ENCODE measurements at regions of chr3 and their contacts with region 1.

Region 1: DNA sequence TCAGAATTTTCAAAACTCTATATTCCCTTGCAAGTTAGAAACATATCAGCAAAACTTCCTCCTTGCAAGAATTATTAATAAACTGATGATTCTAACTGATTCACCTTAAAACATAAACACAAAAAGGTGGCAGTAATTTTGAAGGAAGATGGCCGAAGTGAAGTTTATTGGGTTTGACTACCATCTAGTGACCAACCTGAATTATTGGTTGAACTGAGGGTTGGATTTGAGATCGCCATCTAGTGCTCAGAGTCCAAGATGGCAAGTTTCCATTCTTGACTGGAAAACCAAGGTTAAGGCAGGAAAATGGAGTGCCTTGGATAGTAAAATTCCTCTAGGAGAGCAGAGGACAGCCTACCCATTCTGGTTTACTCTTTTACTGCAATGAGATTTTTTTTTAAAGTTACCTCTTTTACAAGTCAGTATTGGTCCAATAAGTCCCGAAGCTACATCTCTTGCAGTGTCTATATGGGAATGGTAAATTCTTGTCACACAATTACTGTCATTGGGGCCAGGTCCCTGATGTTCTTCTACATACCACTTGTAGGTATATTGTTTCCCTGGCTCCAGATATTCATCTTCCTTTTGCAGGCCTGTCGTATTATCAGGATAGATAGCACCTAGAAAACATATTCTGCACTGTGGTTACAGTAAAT is 51.6 kb upstream of the CP start:
- DNase-seq: peak; percentile 57 to 70
- H3K4me3 ChIP-seq: no peak overlapping the region
- H3K4me3 Mint-ChIP-seq: no peak overlapping the region
- H3K27ac Mint-ChIP-seq: no peak overlapping the region
- H3K4me1 ChIP-seq: peaks cover 12% of the 10 kb centered on the region
- H3K4me1 Mint-ChIP-seq: peaks cover 21% of the 10 kb centered on the region
- H3K27me3 ChIP-seq: no peaks in the 10 kb centered on the region
- H3K27me3 Mint-ChIP-seq: no peaks in the 10 kb centered on the region
- CTCF ChIP-seq: peak; percentile 90 to 95

Region 2: DNA sequence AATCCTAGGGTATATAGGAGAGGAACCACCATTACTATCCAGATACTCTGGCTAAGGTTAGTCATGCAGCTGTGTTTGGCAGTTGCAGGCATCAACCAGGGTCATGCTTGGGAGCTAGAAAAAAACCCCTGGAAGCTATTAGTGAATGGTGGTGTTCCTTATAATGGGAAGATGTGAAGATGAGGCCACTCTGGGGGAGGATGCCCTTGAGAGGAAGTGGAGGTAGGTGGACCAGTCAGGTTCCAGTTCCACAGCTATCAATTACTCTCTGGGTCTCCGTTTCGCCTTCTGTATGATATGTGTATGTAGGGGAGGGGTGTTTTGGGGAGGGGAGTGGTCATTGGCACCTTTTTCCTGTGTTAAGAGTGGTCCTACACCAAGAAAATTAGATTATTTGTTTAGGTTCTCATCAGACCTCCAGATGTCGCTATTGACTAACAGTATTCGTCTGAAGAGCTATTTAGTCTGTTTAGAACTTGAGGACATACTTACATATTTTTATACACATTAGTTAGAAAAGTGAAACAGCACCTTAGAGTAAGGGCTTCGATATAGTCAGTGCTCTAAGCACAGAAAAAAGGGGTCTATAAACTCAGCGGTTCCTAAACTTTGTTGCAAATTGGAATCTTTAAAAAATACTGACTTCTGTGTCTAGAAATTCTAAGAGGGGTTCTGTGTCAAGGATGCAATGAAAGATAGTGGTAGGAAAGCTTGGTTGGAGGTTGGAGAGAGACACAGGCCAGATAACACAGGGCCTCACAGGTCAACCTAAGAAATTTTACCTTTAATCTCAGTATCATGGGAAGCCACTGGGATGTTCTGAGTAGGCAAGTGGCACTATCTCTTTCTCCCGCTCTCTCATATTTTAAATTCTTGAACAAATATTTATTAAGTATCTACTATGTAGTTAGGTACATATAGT is 152.9 kb before region 1 on chr3:
- CTCF ChIA-PET with region 1: interaction called, 12 read pairs
- POLR2A ChIA-PET with region 1: no interaction called
- intact Hi-C with region 1: loop called (anchors 1 kb)
- DNase-seq: peak in 1 of 2 experiments; percentile 51
- H3K4me3 ChIP-seq: no peak overlapping the region
- H3K4me3 Mint-ChIP-seq: no peak overlapping the region
- H3K27ac Mint-ChIP-seq: no peak overlapping the region
- H3K4me1 ChIP-seq: peaks cover 4% of the 10 kb centered on the region; the same call in 1 of the 2 replicates
- H3K4me1 Mint-ChIP-seq: peaks cover 14% of the 10 kb centered on the region
- H3K27me3 ChIP-seq: no peaks in the 10 kb centered on the region
- H3K27me3 Mint-ChIP-seq: no peaks in the 10 kb centered on the region
- CTCF ChIP-seq: peak; percentile 42 to 64

Region 3: DNA sequence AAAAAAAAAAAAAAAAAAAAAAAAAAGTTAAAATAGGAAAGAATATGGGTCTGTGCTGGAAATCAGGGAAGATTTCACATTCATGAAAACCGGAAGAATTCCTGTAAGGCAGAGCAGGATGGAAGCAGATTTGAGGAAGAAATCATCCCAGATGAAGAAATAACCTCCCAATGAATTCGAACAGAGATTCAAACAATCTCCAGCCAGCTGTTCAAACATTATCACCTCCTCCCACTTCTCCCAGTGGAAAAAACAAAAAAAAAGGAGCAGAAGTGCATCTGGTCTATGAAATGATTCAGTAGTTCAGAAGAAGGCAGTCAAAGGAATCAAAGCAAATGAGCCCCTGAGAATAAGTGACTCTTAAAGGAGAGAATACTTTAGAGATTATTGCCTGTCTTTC is 84.7 kb before region 1 on chr3:
- CTCF ChIA-PET with region 1: no interaction called
- POLR2A ChIA-PET with region 1: no interaction called
- intact Hi-C with region 1: loop called (anchors 5 kb)
- DNase-seq: no peak
- H3K4me3 ChIP-seq: no peak overlapping the region
- H3K4me3 Mint-ChIP-seq: no peak overlapping the region
- H3K27ac Mint-ChIP-seq: no peak overlapping the region
- H3K4me1 ChIP-seq: peaks cover 21% of the 10 kb centered on the region
- H3K4me1 Mint-ChIP-seq: peaks cover 15% of the 10 kb centered on the region
- H3K27me3 ChIP-seq: no peaks in the 10 kb centered on the region
- H3K27me3 Mint-ChIP-seq: no peaks in the 10 kb centered on the region
- CTCF ChIP-seq: no peak

Region 4: DNA sequence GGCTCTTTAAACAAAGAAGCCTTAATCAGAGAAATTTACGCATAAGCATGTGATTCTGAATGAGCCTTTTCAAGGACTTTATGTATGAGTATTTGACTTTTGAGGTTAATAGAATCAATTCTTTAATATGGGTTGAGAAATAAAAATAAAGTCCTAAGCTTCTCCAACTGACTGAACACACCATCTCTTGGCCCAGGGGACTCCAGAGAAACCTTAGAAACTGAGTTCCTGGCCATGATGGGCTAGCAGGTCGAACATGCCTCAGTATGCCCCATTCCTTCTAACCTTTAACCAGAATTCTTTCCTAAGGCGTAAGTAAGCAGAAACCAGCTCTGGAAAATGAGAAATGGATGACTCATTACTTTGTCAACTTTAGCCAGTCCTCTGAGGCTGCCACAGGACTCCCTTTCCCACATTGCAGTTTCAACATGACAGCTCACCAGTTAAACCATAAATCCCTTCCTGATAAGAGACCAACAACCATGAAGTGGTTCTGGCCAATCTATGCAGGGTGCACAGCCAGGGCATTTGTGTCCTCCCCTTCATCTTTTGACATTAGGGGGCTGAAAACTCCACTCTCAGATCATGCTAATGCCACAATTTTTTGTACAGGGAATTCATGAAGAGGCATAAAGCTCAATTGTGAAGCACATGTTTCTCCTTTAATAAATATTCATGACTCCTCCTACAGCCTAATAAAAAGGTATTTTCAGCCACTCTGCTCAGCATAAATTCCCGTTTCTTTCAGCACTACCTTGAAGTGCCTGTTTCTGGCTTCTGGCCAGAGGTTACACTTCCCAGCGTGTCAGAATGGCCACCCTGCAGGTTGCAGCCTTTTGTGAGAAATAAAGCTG is 26.9 kb after region 1 on chr3:
- CTCF ChIA-PET with region 1: no interaction called
- POLR2A ChIA-PET with region 1: no interaction called
- intact Hi-C with region 1: loop called (anchors 1 kb)
- DNase-seq: peak; percentile 81 to 88
- H3K4me3 ChIP-seq: no peak overlapping the region
- H3K4me3 Mint-ChIP-seq: peak overlapping the region; percentile 49
- H3K27ac Mint-ChIP-seq: peak overlapping the region; percentile 61
- H3K4me1 ChIP-seq: peaks cover 35% of the 10 kb centered on the region
- H3K4me1 Mint-ChIP-seq: peaks cover 16% of the 10 kb centered on the region
- H3K27me3 ChIP-seq: no peaks in the 10 kb centered on the region
- H3K27me3 Mint-ChIP-seq: no peaks in the 10 kb centered on the region
- CTCF ChIP-seq: no peak

Region 5: DNA sequence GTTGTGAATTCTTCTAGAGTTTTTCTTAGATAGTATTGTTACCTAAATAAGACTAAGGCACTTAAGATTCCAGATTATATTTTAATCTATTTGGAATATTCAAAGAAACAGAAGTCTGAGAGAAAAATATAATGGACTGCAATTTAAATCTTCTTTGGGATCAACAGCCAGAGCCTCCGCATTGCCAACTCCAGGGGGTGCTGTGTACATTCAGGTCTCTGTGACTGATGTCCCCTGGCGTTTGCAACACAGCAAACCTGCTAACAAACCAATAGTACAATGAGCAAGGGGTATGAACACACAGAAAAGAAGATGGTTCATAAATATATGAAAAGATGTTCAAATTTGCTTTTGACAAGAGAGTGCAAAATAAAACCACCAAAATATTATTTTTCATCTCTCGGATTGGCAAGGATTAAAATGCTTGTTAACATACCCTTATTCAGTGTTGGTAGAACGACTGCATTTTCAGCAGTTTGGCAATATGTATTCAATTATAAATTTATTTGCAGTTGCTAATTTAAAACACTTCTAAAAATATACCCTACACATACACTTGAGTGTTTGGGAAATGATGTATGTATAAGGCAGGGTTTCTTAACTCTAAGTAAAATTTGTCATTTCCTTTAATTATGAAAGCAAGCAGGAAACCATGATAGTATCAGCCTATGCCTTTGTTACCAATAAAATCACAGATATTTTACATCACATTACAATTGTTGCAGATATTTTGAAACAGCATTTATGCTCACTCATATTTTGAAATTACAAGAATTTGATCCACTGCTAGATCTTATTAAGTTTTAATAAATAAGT is 120.3 kb after region 1 on chr3:
- CTCF ChIA-PET with region 1: no interaction called
- POLR2A ChIA-PET with region 1: no interaction called
- intact Hi-C with region 1: no loop called
- DNase-seq: peak; percentile 76 to 82
- H3K4me3 ChIP-seq: no peak overlapping the region
- H3K4me3 Mint-ChIP-seq: no peak overlapping the region
- H3K27ac Mint-ChIP-seq: no peak overlapping the region
- H3K4me1 ChIP-seq: peaks cover 17% of the 10 kb centered on the region
- H3K4me1 Mint-ChIP-seq: peaks cover 29% of the 10 kb centered on the region
- H3K27me3 ChIP-seq: no peaks in the 10 kb centered on the region
- H3K27me3 Mint-ChIP-seq: no peaks in the 10 kb centered on the region
- CTCF ChIP-seq: peak; percentile 90 to 97

Region 6: DNA sequence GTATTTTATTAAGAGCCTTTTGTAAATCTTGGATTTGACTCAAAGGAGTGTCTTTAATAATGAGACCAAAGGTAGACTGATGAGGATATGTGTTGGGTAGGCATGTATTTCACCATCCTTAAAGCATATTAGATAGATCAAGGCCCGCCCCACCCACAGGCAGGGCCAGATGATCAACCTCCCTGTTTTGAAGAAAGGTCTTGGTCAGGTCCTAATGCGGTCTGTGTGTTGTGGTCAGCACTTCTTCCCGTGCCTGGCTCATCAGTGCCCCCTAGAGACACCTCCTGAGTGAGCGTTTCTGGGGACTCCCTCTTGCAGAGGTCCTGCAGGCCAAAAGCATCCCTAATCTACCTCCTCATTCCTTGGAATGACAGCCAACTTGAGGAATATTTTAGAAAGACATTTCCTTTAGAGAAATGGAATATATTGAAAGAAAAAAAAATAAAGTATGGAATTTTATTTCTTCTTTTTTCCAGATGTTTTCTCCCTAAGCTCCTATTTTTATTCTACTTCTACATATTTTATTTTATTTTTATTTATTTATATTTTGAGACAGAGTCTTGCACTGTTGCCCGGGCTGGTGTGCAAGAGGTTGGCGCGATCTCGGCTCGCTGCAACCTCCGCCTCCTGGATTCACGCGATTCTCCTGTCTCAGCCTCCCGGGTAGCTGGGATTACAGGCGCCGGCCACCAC is 207.2 kb after region 1 on chr3:
- CTCF ChIA-PET with region 1: no interaction called
- POLR2A ChIA-PET with region 1: no interaction called
- intact Hi-C with region 1: loop called (anchors 1 kb)
- DNase-seq: peak; percentile 87 to 88
- H3K4me3 ChIP-seq: no peak overlapping the region
- H3K4me3 Mint-ChIP-seq: no peak overlapping the region
- H3K27ac Mint-ChIP-seq: no peak overlapping the region
- H3K4me1 ChIP-seq: peaks cover 9% of the 10 kb centered on the region
- H3K4me1 Mint-ChIP-seq: peaks cover 7% of the 10 kb centered on the region
- H3K27me3 ChIP-seq: no peaks in the 10 kb centered on the region
- H3K27me3 Mint-ChIP-seq: no peaks in the 10 kb centered on the region
- CTCF ChIP-seq: peak; percentile 86 to 88

Region 7: GRCh38 chr3:149717391-149718056 is 444.3 kb after region 1 on chr3:
- CTCF ChIA-PET with region 1: no interaction called
- POLR2A ChIA-PET with region 1: no interaction called
- intact Hi-C with region 1: no loop called
- DNase-seq: peak; percentile 61 to 64
- H3K4me3 ChIP-seq: no peak overlapping the region
- H3K4me3 Mint-ChIP-seq: no peak overlapping the region
- H3K27ac Mint-ChIP-seq: no peak overlapping the region
- H3K4me1 ChIP-seq: no peaks in the 10 kb centered on the region
- H3K4me1 Mint-ChIP-seq: no peaks in the 10 kb centered on the region
- H3K27me3 ChIP-seq: no peaks in the 10 kb centered on the region
- H3K27me3 Mint-ChIP-seq: no peaks in the 10 kb centered on the region
- CTCF ChIP-seq: peak; percentile 55 to 69

Region 8: DNA sequence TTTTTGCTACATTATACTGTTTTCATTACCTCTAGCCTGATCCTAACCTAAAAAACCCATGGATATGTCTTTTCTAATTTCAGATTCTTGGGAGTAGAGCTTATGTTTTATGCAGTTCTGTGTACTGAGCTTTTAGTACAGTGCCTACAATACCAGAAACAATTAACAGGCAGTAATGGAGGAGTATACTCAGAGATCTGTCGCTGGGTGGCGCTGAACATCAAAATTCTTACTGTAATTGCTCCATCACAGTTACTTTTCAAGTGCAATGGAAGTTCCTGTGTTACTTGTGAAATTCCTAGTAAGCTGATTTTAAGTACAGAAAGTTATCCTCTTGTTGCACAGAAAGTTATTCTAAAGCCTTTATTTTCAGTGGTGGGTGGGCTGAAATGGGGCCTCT is 606.6 kb after region 1 on chr3:
- CTCF ChIA-PET with region 1: no interaction called
- POLR2A ChIA-PET with region 1: no interaction called
- intact Hi-C with region 1: no loop called
- DNase-seq: peak; percentile 46 to 47
- H3K4me3 ChIP-seq: no peak overlapping the region
- H3K4me3 Mint-ChIP-seq: no peak overlapping the region
- H3K27ac Mint-ChIP-seq: no peak overlapping the region
- H3K4me1 ChIP-seq: no peaks in the 10 kb centered on the region
- H3K4me1 Mint-ChIP-seq: no peaks in the 10 kb centered on the region
- H3K27me3 ChIP-seq: no peaks in the 10 kb centered on the region
- H3K27me3 Mint-ChIP-seq: no peaks in the 10 kb centered on the region
- CTCF ChIP-seq: peak; percentile 27 to 35

Measured in Caco-2 (cell line).